B cell (primary cell): ENCODE measurements at regions of chr13 and their contacts with region 1.

Region 1: DNA sequence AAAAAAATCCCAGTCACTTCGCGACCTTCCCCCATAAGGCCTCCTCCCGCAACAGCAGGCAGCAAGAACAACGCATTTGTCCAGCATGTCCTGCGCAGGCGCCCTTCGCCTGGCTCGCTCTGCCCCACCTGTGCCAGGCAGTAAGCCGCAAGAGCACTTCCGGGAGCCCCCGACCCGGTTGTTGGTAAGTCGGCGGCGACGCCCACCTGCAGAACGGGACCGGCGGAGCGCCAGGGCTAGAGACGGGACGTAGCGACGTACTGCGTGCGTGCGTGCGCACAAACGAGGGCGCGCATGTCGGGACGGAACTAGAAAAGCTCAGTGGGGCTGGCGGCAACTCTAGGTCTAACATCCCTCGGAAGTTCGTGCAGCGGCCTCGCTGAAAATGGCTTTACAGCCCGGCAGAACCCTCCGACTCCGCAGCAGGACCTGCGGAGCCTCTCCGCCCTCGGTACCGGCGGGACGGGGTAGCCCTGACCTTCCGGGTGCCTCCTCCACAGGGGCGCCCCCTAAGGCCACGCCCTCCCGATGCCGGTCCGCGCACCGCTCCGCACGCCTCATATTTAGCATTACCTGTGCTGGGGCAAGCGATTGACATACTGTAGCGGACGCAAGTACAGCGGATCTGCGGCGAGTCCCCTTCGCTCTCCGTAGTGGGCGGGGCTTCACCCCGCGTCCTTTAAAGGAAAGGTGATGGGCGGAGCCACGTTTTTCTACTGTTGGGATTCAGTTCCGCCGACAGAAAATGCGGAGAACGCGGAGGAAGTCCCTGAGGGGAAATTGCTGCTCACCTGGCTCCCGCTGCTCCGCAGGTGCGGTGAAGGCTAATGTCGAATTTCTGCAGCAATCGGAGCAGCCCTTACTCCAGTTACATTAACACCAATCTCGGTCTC is at the start of gene MTIF3:
- DNase-seq: peak; percentile 99
- ATAC-seq: peak; percentile 75
- H3K4me3 ChIP-seq: peak within 1 kb of the TSS; percentile 71 to 94 (median 90)
- H3K4me3 Mint-ChIP-seq: peak within 1 kb of the TSS; percentile 94
- H3K27ac ChIP-seq: peak within 1 kb of the TSS; percentile 92 to 98
- H3K27ac Mint-ChIP-seq: peak within 1 kb of the TSS; percentile 98
- H3K4me1 ChIP-seq: peaks cover 55 to 58% of the 10 kb centered on the region in 2 donors
- H3K4me1 Mint-ChIP-seq: peaks cover 57% of the 10 kb centered on the region
- H3K27me3 ChIP-seq: no peaks in the 10 kb centered on the region
- H3K27me3 Mint-ChIP-seq: no peaks in the 10 kb centered on the region
- CTCF ChIP-seq: no peak
- total RNA-seq, gene MTIF3: 78.1 and 86.8 TPM in 2 replicates

Region 2: DNA sequence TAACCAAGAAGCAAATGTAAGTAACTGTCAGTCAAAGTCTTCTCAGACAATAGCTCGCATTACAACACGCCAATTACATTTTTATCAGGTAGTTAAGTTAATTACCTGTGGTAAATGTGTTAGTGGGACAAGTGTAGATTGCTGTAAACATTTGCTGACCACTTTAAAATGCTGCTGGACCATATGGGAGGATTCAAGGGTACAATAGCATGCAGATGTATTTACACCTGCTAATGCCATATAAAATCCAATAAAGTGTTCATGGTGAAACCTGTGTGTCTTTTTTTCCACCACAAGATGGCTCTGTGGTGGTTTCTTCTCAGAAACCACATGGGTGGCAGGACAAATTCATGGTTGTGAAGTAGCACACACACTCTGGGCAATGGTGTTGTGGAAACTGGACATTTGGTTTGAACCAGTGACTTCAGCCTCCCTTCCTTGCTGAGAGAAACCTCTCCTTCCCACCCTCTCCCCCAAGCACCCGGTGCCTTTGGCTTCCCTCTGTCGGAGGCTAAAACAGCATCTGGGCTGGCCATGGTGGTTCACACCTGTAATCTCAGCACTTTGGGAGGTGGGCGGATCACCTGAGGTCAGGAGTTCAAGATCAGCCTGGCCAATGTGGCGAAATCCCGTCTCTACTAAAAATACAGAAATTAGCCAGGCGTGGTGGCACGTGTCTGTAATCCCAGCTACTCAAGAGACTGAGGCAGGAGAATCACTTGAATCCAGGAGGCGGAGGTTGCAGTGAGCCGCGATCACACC is 43.8 kb before region 1 on chr13:
- CTCF ChIA-PET with region 1: interaction called, 5 read pairs
- POLR2A ChIA-PET with region 1: no interaction called
- intact Hi-C with region 1: loop called (anchors 1 kb)
- DNase-seq: peak; percentile 69
- ATAC-seq: peak; percentile 57
- H3K4me3 ChIP-seq: no peak overlapping the region
- H3K4me3 Mint-ChIP-seq: no peak overlapping the region
- H3K27ac ChIP-seq: no peak overlapping the region
- H3K27ac Mint-ChIP-seq: no peak overlapping the region
- H3K4me1 ChIP-seq: peaks cover 7% of the 10 kb centered on the region in 2 donors
- H3K4me1 Mint-ChIP-seq: peaks cover 7% of the 10 kb centered on the region
- H3K27me3 ChIP-seq: peaks cover 0 to 3% (median 0%) of the 10 kb centered on the region in 4 experiments
- H3K27me3 Mint-ChIP-seq: peaks cover 33% of the 10 kb centered on the region
- CTCF ChIP-seq: peak; percentile 68

Region 3: GRCh38 chr13:27482983-27483382 is 32.8 kb after region 1 on chr13:
- CTCF ChIA-PET with region 1: no interaction called
- POLR2A ChIA-PET with region 1: interaction called, 7 read pairs
- intact Hi-C with region 1: loop called (anchors 1 kb)
- DNase-seq: peak; percentile 90
- ATAC-seq: peak; percentile 99
- H3K4me3 ChIP-seq: peak overlapping the region in 4 of 5 experiments; percentile 11 to 43 (median 30)
- H3K4me3 Mint-ChIP-seq: peak overlapping the region; percentile 81
- H3K27ac ChIP-seq: peak overlapping the region; percentile 71 to 82
- H3K27ac Mint-ChIP-seq: peak overlapping the region; percentile 93
- H3K4me1 ChIP-seq: peaks cover 37 to 45% of the 10 kb centered on the region in 2 donors
- H3K4me1 Mint-ChIP-seq: peaks cover 41% of the 10 kb centered on the region
- H3K27me3 ChIP-seq: no peaks in the 10 kb centered on the region
- H3K27me3 Mint-ChIP-seq: no peaks in the 10 kb centered on the region
- CTCF ChIP-seq: no peak

Region 4: GRCh38 chr13:27620377-27621115 is 170.4 kb after region 1 on chr13 and contains the start of gene LNX2:
- CTCF ChIA-PET with region 1: interaction called, 10 read pairs
- POLR2A ChIA-PET with region 1: interaction called, 37 read pairs
- intact Hi-C with region 1: loop called (anchors 1 kb)
- DNase-seq: peak; percentile 96
- ATAC-seq: peak; percentile 83
- H3K4me3 ChIP-seq: peak within 1 kb of the TSS; percentile 77 to 92 (median 90)
- H3K4me3 Mint-ChIP-seq: peak within 1 kb of the TSS; percentile 93
- H3K27ac ChIP-seq: peak within 1 kb of the TSS; percentile 98
- H3K27ac Mint-ChIP-seq: peak within 1 kb of the TSS; percentile 92
- H3K4me1 ChIP-seq: peaks cover 27 to 28% of the 10 kb centered on the region in 2 donors
- H3K4me1 Mint-ChIP-seq: peaks cover 62% of the 10 kb centered on the region
- H3K27me3 ChIP-seq: no peaks in the 10 kb centered on the region
- H3K27me3 Mint-ChIP-seq: no peaks in the 10 kb centered on the region
- CTCF ChIP-seq: no peak
- total RNA-seq, gene LNX2: 10.0 and 10.9 TPM in 2 replicates

Region 5: GRCh38 chr13:28273919-28274318 is 823.7 kb after region 1 on chr13:
- CTCF ChIA-PET with region 1: no interaction called
- POLR2A ChIA-PET with region 1: no interaction called
- intact Hi-C with region 1: loop called (anchors 10 kb)
- DNase-seq: no peak
- ATAC-seq: no peak
- H3K4me3 ChIP-seq: no peak overlapping the region
- H3K4me3 Mint-ChIP-seq: no peak overlapping the region
- H3K27ac ChIP-seq: no peak overlapping the region
- H3K27ac Mint-ChIP-seq: no peak overlapping the region
- H3K4me1 ChIP-seq: peaks cover 8 to 10% of the 10 kb centered on the region in 2 donors
- H3K4me1 Mint-ChIP-seq: peaks cover 11% of the 10 kb centered on the region
- H3K27me3 ChIP-seq: no peaks in the 10 kb centered on the region
- H3K27me3 Mint-ChIP-seq: no peaks in the 10 kb centered on the region
- CTCF ChIP-seq: no peak